ENCODE measurements at regions of chr10 and their contacts with region 1.

Region 1: GRCh38 chr10:12348870-12349628 is at the start of gene CAMK1D:
- DNase-seq: peak; percentile 83 to 92 (median 90)
- ATAC-seq: peak; percentile 84
- H3K4me3 ChIP-seq: peak within 1 kb of the TSS; percentile 83
- H3K4me3 Mint-ChIP-seq: peak within 1 kb of the TSS; percentile 78 to 99 (median 97)
- H3K27ac ChIP-seq: peak within 1 kb of the TSS; percentile 89
- H3K27ac Mint-ChIP-seq: peak within 1 kb of the TSS; percentile 86 to 99 (median 97)
- H3K4me1 ChIP-seq: peaks cover 18 to 19% of the 10 kb centered on the region in 2 donors
- H3K4me1 Mint-ChIP-seq: peaks cover 23 to 51% (median 42%) of the 10 kb centered on the region in 7 donors
- H3K27me3 ChIP-seq: no peaks in the 10 kb centered on the region
- H3K27me3 Mint-ChIP-seq: peaks cover 0 to 64% (median 0%) of the 10 kb centered on the region in 5 donors
- total RNA-seq, gene CAMK1D: 12.5 to 43.2 (median 18.7) TPM

Region 2: GRCh38 chr10:10623958-10624566 is 1725.0 kb before region 1 on chr10:
- CTCF ChIA-PET with region 1: no interaction called
- POLR2A ChIA-PET with region 1: no interaction called
- intact Hi-C with region 1: no loop called
- DNase-seq: no peak
- ATAC-seq: no peak
- H3K4me3 ChIP-seq: no peak overlapping the region
- H3K4me3 Mint-ChIP-seq: no peak overlapping the region
- H3K27ac ChIP-seq: no peak overlapping the region
- H3K27ac Mint-ChIP-seq: no peak overlapping the region
- H3K4me1 ChIP-seq: no peaks in the 10 kb centered on the region
- H3K4me1 Mint-ChIP-seq: no peaks in the 10 kb centered on the region
- H3K27me3 ChIP-seq: no peaks in the 10 kb centered on the region
- H3K27me3 Mint-ChIP-seq: peaks cover 0 to 9% (median 0%) of the 10 kb centered on the region in 5 donors

Region 3: DNA sequence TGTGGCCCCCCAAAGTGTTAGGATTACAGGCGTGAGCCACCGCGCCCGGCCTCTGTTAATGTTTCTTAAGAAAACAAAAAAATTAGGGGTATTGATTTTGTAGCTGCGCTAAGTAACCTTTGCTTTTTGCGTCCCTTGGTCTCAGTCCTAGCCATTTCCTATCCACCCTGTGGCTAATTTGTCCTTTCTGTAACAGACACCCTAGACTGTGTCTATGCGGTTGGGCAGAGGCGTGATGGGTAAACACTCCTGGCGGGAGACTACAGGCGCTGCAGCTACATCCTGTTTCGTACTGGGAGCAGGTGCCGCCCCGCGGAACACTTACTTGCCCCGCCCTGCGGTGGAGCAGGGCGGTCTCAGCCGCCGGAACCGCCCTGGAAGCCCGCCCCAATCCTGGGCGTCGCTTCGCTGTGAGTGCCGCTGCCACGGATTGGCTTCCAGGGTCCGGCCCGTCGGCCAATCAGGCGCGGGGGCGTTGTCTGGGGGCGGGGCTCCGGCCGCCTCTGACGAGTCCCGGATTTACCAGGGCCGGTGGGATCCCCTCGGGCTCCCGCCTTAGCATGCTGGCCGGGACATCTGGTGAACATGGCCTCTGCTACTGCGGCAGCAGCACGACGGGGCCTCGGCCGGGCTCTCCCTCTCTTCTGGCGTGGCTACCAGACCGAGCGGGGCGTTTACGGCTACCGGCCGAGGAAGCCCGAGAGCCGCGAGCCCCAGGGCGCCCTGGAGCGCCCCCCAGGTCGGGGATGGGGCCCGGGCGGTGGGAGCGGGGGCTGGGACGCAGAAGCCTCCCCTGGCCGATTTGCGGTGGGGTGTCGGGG is 280.4 kb before region 1 on chr10 and contains the start of gene DHTKD1:
- CTCF ChIA-PET with region 1: no interaction called
- POLR2A ChIA-PET with region 1: no interaction called
- intact Hi-C with region 1: loop called in 1 of 2 experiments (anchors 1 kb)
- DNase-seq: peak; percentile 96 to 100 (median 98)
- ATAC-seq: peak; percentile 99
- H3K4me3 ChIP-seq: peak within 1 kb of the TSS; percentile 85
- H3K4me3 Mint-ChIP-seq: peak within 1 kb of the TSS; percentile 84 to 92 (median 88)
- H3K27ac ChIP-seq: peak within 1 kb of the TSS; percentile 85
- H3K27ac Mint-ChIP-seq: peak within 1 kb of the TSS; percentile 85 to 99 (median 95)
- H3K4me1 ChIP-seq: peaks cover 6 to 15% of the 10 kb centered on the region in 2 donors
- H3K4me1 Mint-ChIP-seq: peaks cover 12 to 27% (median 20%) of the 10 kb centered on the region in 7 donors
- H3K27me3 ChIP-seq: no peaks in the 10 kb centered on the region
- H3K27me3 Mint-ChIP-seq: no peaks in the 10 kb centered on the region
- total RNA-seq, gene DHTKD1: 10.8 to 25.9 (median 12.5) TPM

Region 4: GRCh38 chr10:12322583-12323131 is 26.4 kb before region 1 on chr10:
- CTCF ChIA-PET with region 1: no interaction called
- POLR2A ChIA-PET with region 1: no interaction called
- intact Hi-C with region 1: loop called in 1 of 2 experiments (anchors 2 kb)
- DNase-seq: no peak
- ATAC-seq: no peak
- H3K4me3 ChIP-seq: no peak overlapping the region
- H3K4me3 Mint-ChIP-seq: no peak overlapping the region
- H3K27ac ChIP-seq: no peak overlapping the region
- H3K27ac Mint-ChIP-seq: no peak overlapping the region
- H3K4me1 ChIP-seq: no peaks in the 10 kb centered on the region
- H3K4me1 Mint-ChIP-seq: peaks cover 0 to 7% (median 5%) of the 10 kb centered on the region in 7 donors
- H3K27me3 ChIP-seq: no peaks in the 10 kb centered on the region
- H3K27me3 Mint-ChIP-seq: no peaks in the 10 kb centered on the region

Region 5: GRCh38 chr10:12448729-12449391 is 99.8 kb after region 1 on chr10:
- CTCF ChIA-PET with region 1: no interaction called
- POLR2A ChIA-PET with region 1: interaction called, 3 read pairs
- intact Hi-C with region 1: loop called (anchors 1 kb)
- DNase-seq: peak; percentile 33 to 90 (median 82)
- ATAC-seq: peak; percentile 95
- H3K4me3 ChIP-seq: peak overlapping the region; percentile 5
- H3K4me3 Mint-ChIP-seq: peak overlapping the region; percentile 65 to 80 (median 70)
- H3K27ac ChIP-seq: no peak overlapping the region
- H3K27ac Mint-ChIP-seq: peak overlapping the region; percentile 89 to 97 (median 93)
- H3K4me1 ChIP-seq: peaks cover 9 to 15% of the 10 kb centered on the region in 2 donors
- H3K4me1 Mint-ChIP-seq: peaks cover 17 to 69% (median 50%) of the 10 kb centered on the region in 7 donors
- H3K27me3 ChIP-seq: no peaks in the 10 kb centered on the region
- H3K27me3 Mint-ChIP-seq: peaks cover 0 to 45% (median 0%) of the 10 kb centered on the region in 5 donors

Region 6: DNA sequence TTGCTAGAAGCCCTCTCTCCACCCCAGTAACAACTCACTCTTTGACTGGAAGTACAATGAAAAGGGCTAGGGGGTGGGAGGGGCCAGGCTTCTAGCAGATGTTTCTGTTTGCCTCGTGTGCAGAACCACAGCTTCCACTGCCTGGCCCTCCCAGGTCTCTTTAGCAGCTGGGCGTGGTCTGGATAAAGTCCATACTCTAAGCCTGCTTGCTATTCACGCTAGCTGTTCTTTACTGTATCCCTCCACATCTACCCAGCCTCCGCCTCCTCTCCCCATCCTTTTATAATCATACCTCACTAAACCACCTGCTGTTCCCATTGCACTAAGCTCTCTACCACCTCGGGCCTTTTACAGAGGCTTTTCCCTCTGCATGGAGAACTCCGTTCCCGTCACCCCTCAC is 289.1 kb after region 1 on chr10:
- CTCF ChIA-PET with region 1: no interaction called
- POLR2A ChIA-PET with region 1: interaction called, 3 read pairs
- intact Hi-C with region 1: loop called in 1 of 2 experiments (anchors 1 kb)
- DNase-seq: peak in 1 of 9 donors; percentile 14
- ATAC-seq: no peak
- H3K4me3 ChIP-seq: no peak overlapping the region
- H3K4me3 Mint-ChIP-seq: peak overlapping the region in 8 of 10 donors; percentile 1 to 69 (median 24)
- H3K27ac ChIP-seq: no peak overlapping the region
- H3K27ac Mint-ChIP-seq: peak overlapping the region in 6 of 9 donors; percentile 16 to 90 (median 54)
- H3K4me1 ChIP-seq: peaks cover 0 to 20% of the 10 kb centered on the region in 2 donors
- H3K4me1 Mint-ChIP-seq: peaks cover 24 to 63% (median 51%) of the 10 kb centered on the region in 7 donors
- H3K27me3 ChIP-seq: no peaks in the 10 kb centered on the region
- H3K27me3 Mint-ChIP-seq: no peaks in the 10 kb centered on the region

Region 7: GRCh38 chr10:13299437-13300287 is 950.6 kb after region 1 on chr10 and contains the start of gene PHYH:
- CTCF ChIA-PET with region 1: no interaction called
- POLR2A ChIA-PET with region 1: no interaction called
- intact Hi-C with region 1: loop called in 1 of 2 experiments (anchors 5 kb)
- DNase-seq: peak; percentile 70 to 88 (median 78)
- ATAC-seq: peak; percentile 77
- H3K4me3 ChIP-seq: peak within 1 kb of the TSS; percentile 69
- H3K4me3 Mint-ChIP-seq: peak within 1 kb of the TSS; percentile 70 to 96 (median 86)
- H3K27ac ChIP-seq: peak within 1 kb of the TSS; percentile 95
- H3K27ac Mint-ChIP-seq: peak within 1 kb of the TSS; percentile 92 to 99 (median 97)
- H3K4me1 ChIP-seq: peaks cover 16 to 19% of the 10 kb centered on the region in 2 donors
- H3K4me1 Mint-ChIP-seq: peaks cover 13 to 34% (median 22%) of the 10 kb centered on the region in 7 donors
- H3K27me3 ChIP-seq: no peaks in the 10 kb centered on the region
- H3K27me3 Mint-ChIP-seq: no peaks in the 10 kb centered on the region
- total RNA-seq, gene PHYH: 11.2 to 17.7 (median 13.2) TPM

Measured in naive thymus-derived CD4-positive, alpha-beta T cell (primary cell).